Posterior vena cava (tissue), 2 donors: ENCODE measurements at regions of chr18 and their contacts with region 1.

Region 1: GRCh38 chr18:31791763-31792579 is 31.3 kb upstream of the SLC25A52 start:
- DNase-seq: no peak

Region 2: DNA sequence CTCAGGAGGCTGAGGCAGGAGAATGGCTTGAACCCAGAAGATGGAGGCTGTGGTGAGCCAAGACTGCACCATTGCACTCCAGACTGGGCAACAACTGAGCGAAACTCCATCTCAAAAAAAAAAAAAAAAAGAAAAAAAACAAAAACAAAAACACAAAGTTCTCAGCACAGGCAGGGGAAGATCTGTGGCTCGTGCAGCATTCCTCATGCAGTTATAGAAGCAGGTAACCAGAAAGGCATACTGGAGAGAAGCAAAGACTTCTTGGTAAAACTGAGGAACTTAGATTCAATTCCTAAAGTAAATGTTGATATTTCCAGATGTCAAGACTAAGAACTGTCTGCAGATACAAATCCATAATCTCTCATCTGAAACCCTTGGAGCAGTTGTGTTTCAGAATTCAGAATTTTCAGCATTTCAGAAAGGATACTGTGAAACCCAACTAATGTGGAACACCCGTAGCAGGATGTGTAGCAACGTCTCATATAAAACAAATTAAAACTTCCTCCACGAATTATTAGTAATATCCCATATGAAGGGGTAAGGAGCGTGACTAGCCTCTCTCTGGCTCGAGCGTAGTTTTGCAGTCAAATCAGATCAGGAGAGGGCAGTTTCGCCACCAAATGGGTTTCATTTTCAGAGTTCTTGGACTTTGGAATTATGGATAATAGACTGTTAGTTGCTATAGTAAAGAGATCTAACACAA is 18.0 kb before region 1 on chr18:
- intact Hi-C with region 1: loop called in 1 of 2 experiments (anchors 1 kb)
- DNase-seq: no peak